Natural killer cell (primary cell): ENCODE measurements at regions of chr3 and their contacts with region 1.

Region 1: DNA sequence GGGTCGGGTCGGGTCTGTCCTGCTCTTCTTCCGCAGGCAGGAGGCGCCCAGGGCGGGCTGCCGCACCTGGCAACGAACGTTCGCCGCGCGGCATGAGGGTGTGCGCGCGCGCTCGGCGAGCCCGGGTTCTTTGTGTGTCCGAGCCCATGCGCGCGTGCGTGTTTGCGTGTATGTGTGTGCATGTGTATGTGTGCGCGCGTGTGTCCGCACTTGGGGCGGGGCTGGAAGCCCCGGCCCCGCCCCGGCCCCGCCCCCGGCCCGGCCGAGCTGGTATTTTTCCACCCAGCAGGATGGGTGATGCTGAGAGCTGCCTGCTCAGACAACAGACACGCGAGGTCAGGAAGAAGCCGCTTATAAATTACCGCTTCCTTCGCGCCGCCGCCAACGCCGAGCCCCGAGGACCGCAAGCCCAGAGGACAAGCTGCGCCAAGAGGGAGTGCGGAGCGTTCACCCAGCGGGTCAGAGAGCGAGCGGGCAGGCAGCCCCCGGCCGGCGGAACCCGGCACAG is at the start of gene SLC6A6:
- DNase-seq: peak; percentile 79 to 98
- ATAC-seq: peak; percentile 72 to 89 (median 80)
- H3K4me3 ChIP-seq: peak within 1 kb of the TSS; percentile 47
- H3K4me3 Mint-ChIP-seq: peak within 1 kb of the TSS; percentile 98
- H3K27ac ChIP-seq: peak within 1 kb of the TSS; percentile 71
- H3K27ac Mint-ChIP-seq: peak within 1 kb of the TSS; percentile 90 to 94
- H3K4me1 ChIP-seq: peaks cover 45% of the 10 kb centered on the region
- H3K4me1 Mint-ChIP-seq: peaks cover 16 to 50% of the 10 kb centered on the region in 2 donors
- H3K27me3 ChIP-seq: no peaks in the 10 kb centered on the region
- H3K27me3 Mint-ChIP-seq: no peaks in the 10 kb centered on the region
- CTCF ChIP-seq: peak; percentile 62
- total RNA-seq, gene SLC6A6: 43.7 to 55.4 (median 50.1) TPM

Region 2: GRCh38 chr3:14424711-14425341 is 22.5 kb after region 1 on chr3:
- intact Hi-C with region 1: loop called (anchors 2 kb)
- DNase-seq: peak; percentile 50 to 77
- ATAC-seq: peak; percentile 70 to 81 (median 74)
- H3K4me3 ChIP-seq: no peak overlapping the region
- H3K4me3 Mint-ChIP-seq: peak overlapping the region; percentile 84
- H3K27ac ChIP-seq: peak overlapping the region; percentile 1
- H3K27ac Mint-ChIP-seq: peak overlapping the region; percentile 74 to 83
- H3K4me1 ChIP-seq: peaks cover 79% of the 10 kb centered on the region
- H3K4me1 Mint-ChIP-seq: peaks cover 67 to 80% of the 10 kb centered on the region in 2 donors
- H3K27me3 ChIP-seq: no peaks in the 10 kb centered on the region
- H3K27me3 Mint-ChIP-seq: no peaks in the 10 kb centered on the region
- CTCF ChIP-seq: no peak

Region 3: DNA sequence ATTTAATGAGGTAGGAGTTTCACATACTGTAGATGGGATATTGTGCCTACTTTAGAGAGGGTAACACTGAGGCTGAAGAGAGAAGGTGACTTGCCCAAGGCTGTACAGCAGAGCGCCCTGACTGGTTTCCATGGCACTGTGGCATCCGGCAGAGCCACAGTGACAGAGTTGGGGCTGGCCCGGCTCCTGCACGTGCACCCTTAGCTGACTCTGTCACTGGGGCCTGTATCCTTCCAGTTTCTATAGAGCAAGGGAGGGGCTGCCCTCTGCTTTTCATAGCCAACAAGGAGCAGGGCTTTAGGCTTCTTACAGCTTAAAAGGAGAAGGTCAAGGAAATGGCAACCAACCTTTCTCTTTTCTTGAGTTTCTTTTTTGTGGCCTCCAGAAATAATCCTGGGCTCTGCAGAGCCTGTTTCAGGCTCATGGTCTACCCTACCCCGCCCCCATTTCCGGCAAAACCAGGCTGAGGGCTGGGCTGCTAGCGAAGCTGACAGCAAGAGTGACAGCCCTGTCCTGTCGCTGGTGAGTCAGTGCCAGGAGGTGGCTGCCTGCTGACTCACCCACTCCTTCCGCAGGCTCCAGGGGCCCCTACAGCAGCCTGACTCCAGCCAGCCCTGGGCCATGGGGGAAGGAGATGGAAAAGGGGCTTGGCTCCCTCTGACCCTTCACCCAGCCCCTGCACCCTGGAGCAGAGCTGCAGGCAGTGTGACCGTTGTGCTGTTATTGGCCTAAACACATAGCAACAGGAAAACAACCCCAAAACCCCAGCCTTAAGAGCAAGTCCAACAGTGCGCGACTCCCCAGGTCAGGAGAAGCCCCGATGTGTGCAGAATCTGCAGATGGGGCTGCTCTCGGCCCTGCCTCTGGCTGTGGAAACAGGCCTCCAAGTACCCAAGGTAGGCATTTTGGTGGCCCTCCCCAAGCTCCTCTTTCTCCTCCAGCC is 29.8 kb after region 1 on chr3:
- intact Hi-C with region 1: loop called (anchors 1 kb)
- DNase-seq: peak; percentile 91 to 96
- ATAC-seq: peak; percentile 75 to 93 (median 85)
- H3K4me3 ChIP-seq: peak overlapping the region; percentile 15
- H3K4me3 Mint-ChIP-seq: peak overlapping the region; percentile 73
- H3K27ac ChIP-seq: peak overlapping the region; percentile 97
- H3K27ac Mint-ChIP-seq: peak overlapping the region; percentile 96 to 97
- H3K4me1 ChIP-seq: peaks cover 96% of the 10 kb centered on the region
- H3K4me1 Mint-ChIP-seq: peaks cover 76 to 85% of the 10 kb centered on the region in 2 donors
- H3K27me3 ChIP-seq: no peaks in the 10 kb centered on the region
- H3K27me3 Mint-ChIP-seq: no peaks in the 10 kb centered on the region
- CTCF ChIP-seq: no peak

Region 4: GRCh38 chr3:14461748-14462324 is 59.5 kb after region 1 on chr3:
- intact Hi-C with region 1: loop called (anchors 1 kb)
- DNase-seq: peak; percentile 39 to 66
- ATAC-seq: peak; percentile 24 to 80 (median 78)
- H3K4me3 ChIP-seq: no peak overlapping the region
- H3K4me3 Mint-ChIP-seq: no peak overlapping the region
- H3K27ac ChIP-seq: no peak overlapping the region
- H3K27ac Mint-ChIP-seq: peak overlapping the region in 1 of 2 donors; percentile 60
- H3K4me1 ChIP-seq: peaks cover 8% of the 10 kb centered on the region
- H3K4me1 Mint-ChIP-seq: peaks cover 7 to 10% of the 10 kb centered on the region in 2 donors
- H3K27me3 ChIP-seq: no peaks in the 10 kb centered on the region
- H3K27me3 Mint-ChIP-seq: no peaks in the 10 kb centered on the region
- CTCF ChIP-seq: peak; percentile 44

Region 5: DNA sequence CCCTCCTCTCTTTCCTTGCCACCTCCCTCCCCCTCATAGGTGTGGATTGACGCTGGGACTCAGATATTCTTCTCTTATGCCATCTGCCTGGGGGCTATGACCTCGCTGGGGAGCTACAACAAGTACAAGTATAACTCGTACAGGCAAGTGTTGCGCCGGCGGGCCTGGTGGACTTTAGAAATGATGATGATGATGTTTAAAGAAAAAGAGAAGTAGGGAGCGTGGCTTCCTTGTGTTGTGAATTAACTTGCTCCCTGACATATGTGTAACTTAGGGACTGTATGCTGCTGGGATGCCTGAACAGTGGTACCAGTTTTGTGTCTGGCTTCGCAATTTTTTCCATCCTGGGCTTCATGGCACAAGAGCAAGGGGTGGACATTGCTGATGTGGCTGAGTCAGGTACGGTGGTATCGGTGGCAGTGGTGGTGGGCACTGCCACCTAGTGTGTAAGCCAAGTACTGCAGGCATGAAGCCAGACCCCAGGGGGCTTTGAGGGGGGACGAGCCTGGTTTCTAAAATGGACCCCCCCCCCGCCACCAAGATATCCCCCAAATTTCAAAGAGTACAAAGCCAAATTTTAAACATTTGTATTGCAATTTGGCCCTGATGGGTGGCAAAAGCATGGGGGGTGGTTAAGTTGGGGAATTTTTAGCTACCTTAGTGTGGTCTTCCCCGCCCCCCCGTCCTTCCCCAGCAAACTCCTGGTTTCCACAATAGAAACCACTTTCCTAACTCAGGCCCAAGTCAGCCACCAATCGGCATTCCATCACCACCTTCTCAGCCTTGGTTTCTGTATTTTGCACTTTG is 65.7 kb after region 1 on chr3:
- intact Hi-C with region 1: loop called (anchors 2 kb)
- DNase-seq: peak; percentile 49 to 74
- ATAC-seq: peak; percentile 71 to 91 (median 87)
- H3K4me3 ChIP-seq: no peak overlapping the region
- H3K4me3 Mint-ChIP-seq: no peak overlapping the region
- H3K27ac ChIP-seq: no peak overlapping the region
- H3K27ac Mint-ChIP-seq: no peak overlapping the region
- H3K4me1 ChIP-seq: no peaks in the 10 kb centered on the region
- H3K4me1 Mint-ChIP-seq: no peaks in the 10 kb centered on the region
- H3K27me3 ChIP-seq: no peaks in the 10 kb centered on the region
- H3K27me3 Mint-ChIP-seq: no peaks in the 10 kb centered on the region
- CTCF ChIP-seq: peak; percentile 84